ENCODE measurements at regions of chr4 and their contacts with region 1.

Region 1: DNA sequence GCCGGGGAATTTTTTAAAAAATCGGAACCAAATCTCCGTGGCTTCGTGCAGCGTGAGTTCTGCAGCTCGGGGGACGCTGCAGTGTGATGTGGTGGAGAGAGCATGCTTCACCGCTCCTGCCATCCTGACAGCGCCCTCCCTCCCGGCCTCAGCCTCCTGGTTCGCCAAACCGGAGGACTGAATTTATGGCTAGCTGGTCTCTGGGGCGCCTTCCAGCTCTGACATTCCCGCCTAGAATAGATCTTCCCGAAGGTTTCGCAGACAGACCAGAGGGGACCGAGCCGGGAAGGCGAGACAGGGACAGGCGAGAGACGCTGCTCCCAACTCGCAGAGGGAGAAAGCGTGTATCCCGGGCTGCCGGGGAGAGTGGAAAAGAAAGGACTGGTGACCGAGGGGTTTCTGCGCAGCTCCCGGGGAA is 25.9 kb downstream of the HOPX start:
- DNase-seq: no peak
- ATAC-seq: peak; percentile 55

Region 2: DNA sequence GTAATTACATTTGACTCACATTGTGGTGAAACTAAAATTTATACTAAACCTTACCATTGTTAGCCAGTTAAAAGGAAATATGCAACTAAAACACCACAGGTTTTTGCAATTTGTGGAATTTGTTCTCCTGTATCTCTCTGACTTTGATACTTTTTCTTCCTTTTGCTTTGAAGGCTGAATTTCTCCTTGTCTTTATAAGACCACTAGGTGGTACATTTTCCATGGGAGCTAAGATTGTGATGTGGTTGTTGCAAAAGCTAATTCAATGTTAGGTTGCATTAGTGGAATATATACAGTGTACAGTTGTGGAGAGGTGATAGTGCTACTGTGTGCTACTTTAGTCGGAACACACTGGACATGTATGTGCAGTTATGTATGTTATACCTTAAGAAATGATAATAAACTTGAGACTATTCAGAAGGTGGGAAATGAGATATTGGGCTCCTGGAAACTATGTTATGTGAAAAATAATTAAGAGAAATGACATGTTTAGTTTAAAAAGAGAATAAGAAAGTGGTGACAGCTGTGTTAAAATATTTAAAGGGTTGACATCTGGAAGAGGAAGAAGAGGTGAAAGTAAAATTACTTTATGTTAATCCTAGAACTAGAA is 79.3 kb before region 1 on chr4:
- intact Hi-C with region 1: loop called (anchors 10 kb)
- DNase-seq: no peak
- ATAC-seq: no peak

Region 3: GRCh38 chr4:56728512-56728911 is 73.3 kb after region 1 on chr4:
- intact Hi-C with region 1: loop called (anchors 5 kb)
- DNase-seq: no peak
- ATAC-seq: peak; percentile 86

Region 4: DNA sequence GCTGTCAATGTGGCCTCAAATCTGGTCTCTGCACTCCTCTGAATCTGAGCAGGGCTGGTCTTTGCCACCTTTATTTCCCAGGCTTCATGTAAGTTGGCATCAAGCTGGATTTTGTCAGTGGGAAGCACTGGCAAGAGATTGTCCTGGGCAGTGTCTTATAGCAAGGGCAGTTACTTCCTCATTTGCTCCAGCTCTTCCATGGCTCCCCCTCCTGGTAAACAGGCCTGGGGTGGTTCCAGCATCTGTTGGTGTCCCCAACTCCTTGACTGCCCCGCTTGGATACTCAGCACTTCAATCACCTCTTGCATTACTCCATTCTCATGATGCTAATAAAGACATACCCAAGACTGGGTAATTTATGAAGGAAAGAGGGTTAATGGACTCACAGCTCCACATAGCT is 237.5 kb after region 1 on chr4:
- intact Hi-C with region 1: no loop called
- DNase-seq: no peak
- ATAC-seq: no peak